ENCODE measurements at regions of chr11 and their contacts with region 1.

Region 1: GRCh38 chr11:17230867-17231851 is 23.4 kb upstream of the PIK3C2A start:
- DNase-seq: no peak
- H3K4me3 ChIP-seq: no peak overlapping the region
- H3K27me3 ChIP-seq: no peaks in the 10 kb centered on the region
- CTCF ChIP-seq: no peak

Region 2: GRCh38 chr11:17276236-17277023 is 45.3 kb after region 1 on chr11 and contains the start of gene NUCB2:
- CTCF ChIA-PET with region 1: interaction called, 10 read pairs
- POLR2A ChIA-PET with region 1: no interaction called
- DNase-seq: peak; percentile 69
- H3K4me3 ChIP-seq: peak within 1 kb of the TSS; percentile 70
- H3K27me3 ChIP-seq: no peaks in the 10 kb centered on the region
- CTCF ChIP-seq: no peak
- polyA plus RNA-seq, gene NUCB2: 119 and 196 TPM in 2 replicates

Region 3: DNA sequence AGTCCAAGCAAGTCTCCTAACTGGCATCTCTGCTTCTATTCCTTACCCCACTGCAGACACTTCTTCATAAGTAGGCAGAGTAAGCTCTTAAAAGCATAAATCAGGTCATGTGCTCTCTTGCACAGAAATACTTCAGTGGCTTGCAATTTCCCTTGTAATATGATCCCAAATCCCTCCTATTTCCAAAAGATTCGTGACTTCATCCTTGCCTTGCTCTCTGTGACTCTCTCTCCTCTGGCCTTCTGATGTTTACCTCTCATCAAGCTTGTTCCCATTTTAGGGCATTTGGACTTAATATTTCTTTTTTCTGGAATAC is 83.0 kb after region 1 on chr11:
- CTCF ChIA-PET with region 1: interaction called, 10 read pairs
- POLR2A ChIA-PET with region 1: no interaction called
- DNase-seq: peak; percentile 78
- H3K4me3 ChIP-seq: no peak overlapping the region
- H3K27me3 ChIP-seq: no peaks in the 10 kb centered on the region
- CTCF ChIP-seq: no peak

Region 4: DNA sequence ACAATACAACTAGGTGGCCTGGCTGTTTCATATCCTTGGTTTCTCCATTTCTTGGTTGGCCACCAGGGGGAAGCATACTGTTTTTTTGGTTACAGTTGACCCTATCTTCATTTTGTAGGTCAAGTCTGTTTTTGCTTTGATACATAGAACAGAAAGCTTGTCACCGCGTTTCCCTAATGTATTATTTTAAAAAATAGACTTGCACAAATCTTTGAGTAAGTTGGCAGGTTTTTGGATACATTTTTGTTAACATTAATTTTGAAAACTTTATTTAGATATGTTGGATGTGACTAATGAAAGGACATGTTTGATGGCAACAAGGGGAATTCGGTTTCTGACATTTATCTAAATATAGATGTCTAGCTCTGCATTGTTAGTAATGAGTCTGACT is 123.4 kb after region 1 on chr11:
- CTCF ChIA-PET with region 1: interaction called, 20 read pairs
- POLR2A ChIA-PET with region 1: no interaction called
- DNase-seq: peak; percentile 19
- H3K4me3 ChIP-seq: no peak overlapping the region
- H3K27me3 ChIP-seq: no peaks in the 10 kb centered on the region
- CTCF ChIP-seq: peak; percentile 67

Region 5: DNA sequence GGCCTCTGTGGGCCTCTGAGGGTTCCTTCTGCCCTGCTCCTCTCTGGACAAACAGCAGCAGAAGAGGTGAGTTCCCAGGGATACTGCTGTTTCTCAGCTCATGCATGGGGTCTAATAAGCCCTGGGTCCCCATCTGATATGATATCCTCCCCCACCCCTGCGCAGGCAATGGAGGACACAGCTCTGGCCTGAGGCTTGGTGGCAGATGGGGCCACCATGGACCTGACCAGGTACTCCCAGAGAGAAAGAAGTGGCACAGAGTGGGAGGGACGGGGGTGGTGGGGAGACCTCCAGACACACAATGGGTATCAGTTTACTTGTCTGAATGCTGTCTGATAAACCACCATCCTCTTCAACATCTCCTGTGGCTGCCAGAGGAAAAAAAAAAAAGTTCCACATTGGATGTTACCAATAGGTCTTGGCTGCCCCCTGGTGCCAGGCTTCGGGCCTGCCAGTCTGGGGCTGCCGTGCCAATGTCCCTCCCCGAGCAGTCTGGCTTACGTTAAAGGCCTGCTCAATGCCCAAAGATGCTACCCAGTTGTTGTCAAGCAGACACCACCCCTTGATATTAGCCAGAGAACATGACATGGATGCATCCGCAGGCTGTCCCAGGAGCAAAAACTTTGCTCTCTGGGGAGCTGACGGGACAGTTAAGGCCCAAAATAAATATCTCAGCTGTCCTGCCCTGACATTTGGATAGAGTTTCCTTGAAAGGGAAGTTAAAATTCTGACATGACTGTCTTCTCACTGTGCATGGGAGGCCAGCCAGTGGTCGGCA is 273.4 kb after region 1 on chr11:
- CTCF ChIA-PET with region 1: interaction called, 18 read pairs
- POLR2A ChIA-PET with region 1: no interaction called
- DNase-seq: no peak
- H3K4me3 ChIP-seq: no peak overlapping the region
- H3K27me3 ChIP-seq: peaks cover 5% of the 10 kb centered on the region
- CTCF ChIP-seq: peak; percentile 91

Measured in BJ (cell line).